Activated CD8-positive, alpha-beta T cell treated with anti-CD3 and anti-CD28 coated beads, Interleukin-2, amount 10 ng/mL, durations not matched to agents 7 days and 5 days (primary cell): ENCODE measurements at regions of chr15 and their contacts with region 1.

Region 1: DNA sequence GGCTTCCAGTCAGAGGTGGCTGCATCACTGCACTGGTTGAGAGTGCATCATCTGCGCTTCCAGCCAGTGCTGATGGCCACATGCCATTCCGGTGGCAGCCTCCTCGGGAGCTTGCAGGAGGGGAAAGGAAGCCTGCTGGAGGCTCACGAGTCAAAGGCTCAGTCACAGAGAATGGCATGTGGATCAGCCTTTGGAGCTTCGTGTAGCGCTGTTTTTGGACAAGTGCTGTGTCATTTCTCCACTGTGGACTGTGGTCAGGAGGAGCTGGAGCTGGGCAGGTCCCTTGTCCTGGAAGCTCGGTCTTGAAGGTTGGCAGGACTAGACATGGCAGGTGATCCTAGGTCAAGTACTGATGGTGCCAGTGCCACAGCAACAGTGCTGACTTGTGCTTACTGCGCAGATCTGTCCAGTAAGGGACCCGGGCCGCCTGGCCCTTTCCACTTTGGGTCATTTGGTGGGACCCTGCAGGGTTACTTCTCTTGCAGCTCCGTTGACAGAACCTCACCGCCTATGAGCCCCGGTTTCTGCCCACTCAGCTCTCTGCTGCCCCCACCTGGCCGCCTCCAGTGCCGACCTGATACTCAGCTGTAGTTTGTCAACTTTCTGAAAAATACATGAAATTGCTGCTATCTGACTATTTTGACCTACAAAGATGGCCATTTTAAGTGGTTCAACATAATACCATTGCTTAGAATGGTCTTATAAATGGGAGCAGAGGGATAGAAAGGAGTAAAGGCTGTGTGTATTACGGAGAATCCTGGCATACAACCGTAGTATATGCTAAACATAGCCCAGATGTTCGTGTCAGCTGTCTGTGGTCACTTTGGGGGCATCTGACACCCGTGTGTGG is 27.6 kb upstream of the TRPM1 start:
- DNase-seq: peak; percentile 86
- ATAC-seq: peak; percentile 88
- H3K4me3 Mint-ChIP-seq: no peak overlapping the region
- H3K27ac Mint-ChIP-seq: no peak overlapping the region
- H3K4me1 Mint-ChIP-seq: no peaks in the 10 kb centered on the region
- H3K27me3 Mint-ChIP-seq: peaks cover 7% of the 10 kb centered on the region

Region 2: GRCh38 chr15:30896211-30896606 is 232.9 kb before region 1 on chr15:
- CTCF ChIA-PET with region 1: interaction called, 32 read pairs
- POLR2A ChIA-PET with region 1: no interaction called
- DNase-seq: no peak
- ATAC-seq: no peak
- H3K4me3 Mint-ChIP-seq: no peak overlapping the region
- H3K27ac Mint-ChIP-seq: no peak overlapping the region
- H3K4me1 Mint-ChIP-seq: no peaks in the 10 kb centered on the region
- H3K27me3 Mint-ChIP-seq: peaks cover 5% of the 10 kb centered on the region

Region 3: DNA sequence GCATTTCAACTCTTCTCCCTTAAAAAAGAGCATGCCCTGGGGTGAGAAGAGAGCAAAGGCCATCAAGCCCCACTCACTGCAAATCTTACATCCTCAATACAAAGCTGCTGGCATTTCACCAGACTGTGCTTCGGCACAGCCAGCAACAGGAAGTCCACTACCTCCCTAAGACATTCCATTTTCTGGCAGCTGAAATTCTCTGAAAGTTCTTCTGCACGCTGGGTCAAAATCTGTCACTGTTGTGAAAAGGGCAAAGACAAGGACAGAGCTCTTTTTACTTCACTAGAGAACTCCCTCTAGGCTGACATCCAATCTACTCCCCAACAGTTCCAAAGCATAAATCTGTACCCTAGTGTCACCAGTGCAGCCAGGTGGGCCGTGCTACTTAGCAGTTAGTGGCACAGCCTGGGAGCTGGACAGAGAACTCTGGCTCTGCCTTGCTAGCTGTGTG is 144.0 kb before region 1 on chr15:
- CTCF ChIA-PET with region 1: interaction called, 14 read pairs
- POLR2A ChIA-PET with region 1: no interaction called
- DNase-seq: no peak
- ATAC-seq: no peak
- H3K4me3 Mint-ChIP-seq: no peak overlapping the region
- H3K27ac Mint-ChIP-seq: no peak overlapping the region
- H3K4me1 Mint-ChIP-seq: peaks cover 49% of the 10 kb centered on the region
- H3K27me3 Mint-ChIP-seq: no peaks in the 10 kb centered on the region

Region 4: GRCh38 chr15:31049682-31050615 is 79.2 kb before region 1 on chr15:
- CTCF ChIA-PET with region 1: interaction called, 11 read pairs
- POLR2A ChIA-PET with region 1: no interaction called
- DNase-seq: no peak
- ATAC-seq: no peak
- H3K4me3 Mint-ChIP-seq: no peak overlapping the region
- H3K27ac Mint-ChIP-seq: peak overlapping the region; percentile 75
- H3K4me1 Mint-ChIP-seq: peaks cover 10% of the 10 kb centered on the region
- H3K27me3 Mint-ChIP-seq: peaks cover 7% of the 10 kb centered on the region

Region 5: DNA sequence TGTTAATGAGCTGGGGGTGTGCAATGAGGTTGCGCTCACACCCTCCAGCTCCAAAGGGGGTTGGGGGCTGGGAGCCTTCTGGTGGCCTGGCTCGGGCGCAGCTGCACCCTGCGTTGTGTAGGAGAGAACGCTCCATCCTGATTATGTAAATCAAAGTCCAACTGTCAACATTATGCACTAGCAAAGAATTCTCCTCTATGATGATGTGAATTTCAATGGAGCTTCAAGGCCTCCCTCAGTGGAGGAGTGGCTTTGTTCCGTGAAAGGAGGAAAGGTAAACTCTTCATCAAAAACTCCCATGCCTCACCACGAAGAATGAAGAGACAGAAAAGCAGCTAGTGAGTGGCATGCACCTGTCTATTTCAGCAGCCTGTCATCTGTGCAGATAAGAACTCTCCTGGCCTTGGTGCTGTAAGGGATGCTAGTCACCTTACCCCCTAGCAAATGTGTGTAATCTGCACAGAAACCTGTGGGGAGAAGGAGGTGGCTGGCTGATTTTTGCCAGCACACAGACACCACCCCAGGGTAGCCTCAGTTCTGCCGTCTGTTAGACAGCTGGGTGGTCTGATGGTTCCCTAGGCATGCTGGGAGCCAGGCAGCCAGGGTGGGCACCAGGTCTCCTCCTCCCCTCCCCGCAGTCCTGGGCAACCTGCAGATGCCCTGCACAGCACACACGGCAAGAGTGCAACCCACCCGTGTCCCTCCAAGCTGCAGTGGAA is 19.3 kb after region 1 on chr15:
- CTCF ChIA-PET with region 1: interaction called, 14 read pairs
- POLR2A ChIA-PET with region 1: no interaction called
- DNase-seq: no peak
- ATAC-seq: no peak
- H3K4me3 Mint-ChIP-seq: no peak overlapping the region
- H3K27ac Mint-ChIP-seq: no peak overlapping the region
- H3K4me1 Mint-ChIP-seq: no peaks in the 10 kb centered on the region
- H3K27me3 Mint-ChIP-seq: no peaks in the 10 kb centered on the region